ENCODE measurements at regions of chr5 and their contacts with region 1.

Region 1: DNA sequence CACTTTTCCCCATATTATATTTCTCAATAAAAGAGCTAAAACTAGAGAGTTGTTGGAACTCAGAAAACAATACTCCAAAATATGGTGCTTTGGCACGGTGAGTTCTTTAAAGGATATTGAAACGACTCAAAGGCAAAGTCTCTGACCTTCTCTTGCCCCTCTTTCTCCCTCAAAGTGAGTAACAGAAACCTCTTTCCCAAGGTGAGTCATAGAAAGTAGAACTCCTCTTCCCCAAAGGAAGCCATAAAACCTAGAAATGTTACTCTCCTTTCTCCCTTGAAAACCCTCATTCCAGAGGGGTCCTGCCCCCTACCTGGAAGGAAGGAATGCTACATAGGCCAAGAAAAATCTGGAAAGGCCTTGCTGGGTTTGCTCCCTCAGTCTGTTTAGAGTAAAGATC is 47.5 kb downstream of the RAPGEF6 start:
- DNase-seq: no peak
- H3K4me3 ChIP-seq: no peak overlapping the region
- H3K27ac ChIP-seq: no peak overlapping the region
- H3K4me1 ChIP-seq: no peaks in the 10 kb centered on the region
- H3K27me3 ChIP-seq: no peaks in the 10 kb centered on the region
- CTCF ChIP-seq: no peak
- POLR2A ChIP-seq: no peak

Region 2: DNA sequence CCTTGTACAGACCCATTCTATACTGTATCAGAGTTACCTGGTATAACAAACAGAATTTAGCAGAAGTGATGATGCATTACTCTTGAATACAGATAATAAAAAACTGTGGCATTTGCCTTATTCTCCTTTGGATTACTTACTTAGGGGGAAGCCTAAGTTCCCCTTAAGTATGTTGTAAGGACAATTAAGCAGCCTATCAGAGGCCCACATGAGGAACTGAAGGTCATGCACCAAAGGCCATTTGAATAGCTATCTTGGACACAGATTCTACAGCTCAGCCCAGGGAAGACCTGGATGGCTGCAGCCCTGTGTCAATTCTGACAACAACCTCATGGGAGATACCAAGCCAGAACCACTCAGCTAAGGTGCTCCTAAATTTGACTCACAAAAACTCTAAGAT is 77.7 kb before region 1 on chr5:
- intact Hi-C with region 1: loop called (anchors 2 kb)
- DNase-seq: no peak
- H3K4me3 ChIP-seq: no peak overlapping the region
- H3K27ac ChIP-seq: no peak overlapping the region
- H3K4me1 ChIP-seq: no peaks in the 10 kb centered on the region
- H3K27me3 ChIP-seq: no peaks in the 10 kb centered on the region
- CTCF ChIP-seq: no peak
- POLR2A ChIP-seq: no peak